AG04450 (cell line): ENCODE measurements at regions of chr7 and their contacts with region 1.

Region 1: DNA sequence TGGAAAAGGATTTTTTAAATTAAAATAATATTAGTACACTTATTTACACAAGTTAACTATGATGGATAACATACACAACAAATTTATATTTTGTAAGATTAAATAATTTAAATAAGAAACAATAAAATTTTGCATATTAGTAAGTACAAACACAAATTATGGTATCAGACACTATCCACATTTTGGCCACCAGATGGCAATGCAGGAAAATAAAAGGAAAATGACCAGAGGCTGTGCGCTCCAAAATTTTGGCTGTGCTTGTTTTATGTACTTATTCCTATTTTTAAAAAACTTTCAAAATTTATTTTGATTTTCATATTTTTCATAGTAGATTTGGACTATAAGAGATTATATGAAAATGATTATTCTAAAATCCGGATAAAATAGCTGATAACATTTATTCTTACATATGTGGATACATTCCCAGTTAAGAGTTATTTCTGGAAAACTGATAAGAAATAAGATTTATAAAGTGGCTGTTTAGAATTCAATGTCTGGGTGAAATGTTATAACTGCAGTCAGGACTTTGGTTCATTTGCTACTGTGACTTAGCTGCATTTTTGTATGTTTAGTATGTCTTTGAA is 274.7 kb upstream of the HGF start:
- DNase-seq: no peak
- H3K4me3 ChIP-seq: no peak overlapping the region
- H3K27ac ChIP-seq: no peak overlapping the region
- H3K27me3 ChIP-seq: no peaks in the 10 kb centered on the region
- CTCF ChIP-seq: peak; percentile 66

Region 2: GRCh38 chr7:82481499-82482097 is 437.0 kb after region 1 on chr7:
- CTCF ChIA-PET with region 1: interaction called, 13 read pairs
- POLR2A ChIA-PET with region 1: no interaction called
- DNase-seq: no peak
- H3K4me3 ChIP-seq: no peak overlapping the region
- H3K27ac ChIP-seq: no peak overlapping the region
- H3K27me3 ChIP-seq: no peaks in the 10 kb centered on the region
- CTCF ChIP-seq: peak; percentile 83

Region 3: GRCh38 chr7:82572195-82572880 is 527.7 kb after region 1 on chr7:
- CTCF ChIA-PET with region 1: interaction called, 54 read pairs
- POLR2A ChIA-PET with region 1: no interaction called
- DNase-seq: peak; percentile 73
- H3K4me3 ChIP-seq: no peak overlapping the region
- H3K27ac ChIP-seq: no peak overlapping the region
- H3K27me3 ChIP-seq: no peaks in the 10 kb centered on the region
- CTCF ChIP-seq: peak; percentile 99

Region 4: DNA sequence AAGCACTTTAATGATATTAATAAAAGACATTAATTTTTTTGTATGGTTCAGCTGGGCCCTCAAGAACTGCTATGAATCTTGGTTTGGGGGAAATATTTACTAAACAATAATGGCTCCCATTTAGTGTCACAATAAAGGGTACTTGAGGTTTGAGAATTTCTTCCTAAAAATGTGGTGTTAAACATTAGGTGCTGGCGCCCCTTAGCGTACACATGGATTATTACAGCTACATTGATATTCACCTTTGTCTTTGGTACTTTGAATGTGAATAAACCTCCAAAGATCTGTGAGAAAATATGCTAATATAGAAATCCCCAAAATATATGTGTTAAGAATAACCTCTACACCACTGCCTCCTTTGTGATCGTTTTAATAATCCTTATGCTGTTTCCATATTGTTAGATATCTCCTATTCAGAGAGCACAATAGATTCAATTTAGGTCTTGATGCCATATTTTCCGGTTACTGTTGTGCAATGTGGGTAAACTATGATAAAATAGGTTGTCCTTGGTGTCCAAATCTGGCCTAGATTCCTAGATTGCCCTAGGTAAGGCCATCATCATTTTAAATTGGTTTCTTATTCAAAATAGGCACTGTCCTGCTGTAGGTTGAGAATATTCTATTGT is 560.8 kb after region 1 on chr7:
- CTCF ChIA-PET with region 1: interaction called, 59 read pairs
- POLR2A ChIA-PET with region 1: no interaction called
- DNase-seq: no peak
- H3K4me3 ChIP-seq: no peak overlapping the region
- H3K27ac ChIP-seq: no peak overlapping the region
- H3K27me3 ChIP-seq: no peaks in the 10 kb centered on the region
- CTCF ChIP-seq: peak; percentile 75